ENCODE measurements at regions of chr2 and their contacts with region 1.

Region 1: DNA sequence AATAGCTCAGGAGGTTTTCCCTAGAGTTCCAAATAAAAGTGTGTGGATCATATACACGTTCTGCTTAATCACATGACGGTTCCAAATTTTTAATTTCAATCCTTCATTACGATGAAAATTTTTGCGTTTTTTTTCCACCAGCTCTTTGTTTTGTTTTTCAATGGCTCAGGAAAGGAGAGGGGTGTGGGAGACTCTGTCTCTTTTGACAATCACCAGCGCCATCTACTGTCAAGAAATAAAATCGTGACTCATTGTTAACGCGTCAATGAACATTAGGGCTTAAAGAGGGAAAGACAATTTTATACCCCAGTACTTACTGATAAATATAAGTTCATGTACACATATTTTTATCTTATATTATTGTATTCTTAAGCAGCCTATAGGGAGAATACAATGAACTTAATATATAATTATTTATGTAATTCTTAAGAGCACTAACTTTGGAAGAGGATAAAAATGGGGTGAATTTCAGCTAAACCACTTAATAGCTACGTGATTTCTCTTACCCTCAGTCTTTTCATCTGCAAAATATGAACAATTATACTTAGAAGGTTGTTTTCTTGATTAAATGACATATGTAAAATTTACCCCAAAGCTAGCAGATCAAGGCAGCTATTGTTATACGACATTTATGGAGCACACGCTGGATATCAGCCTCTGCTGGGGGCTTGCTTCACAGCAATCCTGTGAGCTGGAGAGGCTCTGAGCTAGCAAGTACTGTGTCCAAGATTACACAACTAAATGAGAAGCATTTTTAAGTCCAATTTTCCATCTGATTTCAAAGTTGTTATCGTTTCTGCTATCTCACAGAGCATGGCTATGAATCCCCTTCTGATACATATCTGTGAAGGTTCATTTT is 47.4 kb upstream of the RMDN2 start:
- DNase-seq: peak in 4 of 5 donors; percentile 45 to 57 (median 52)
- H3K4me3 ChIP-seq: no peak overlapping the region
- H3K4me3 Mint-ChIP-seq: no peak overlapping the region
- H3K27ac ChIP-seq: no peak overlapping the region
- H3K27ac Mint-ChIP-seq: no peak overlapping the region
- H3K4me1 ChIP-seq: no peaks in the 10 kb centered on the region
- H3K4me1 Mint-ChIP-seq: no peaks in the 10 kb centered on the region
- H3K27me3 ChIP-seq: no peaks in the 10 kb centered on the region
- H3K27me3 Mint-ChIP-seq: peaks cover 2 to 7% of the 10 kb centered on the region in 2 donors

Region 2: DNA sequence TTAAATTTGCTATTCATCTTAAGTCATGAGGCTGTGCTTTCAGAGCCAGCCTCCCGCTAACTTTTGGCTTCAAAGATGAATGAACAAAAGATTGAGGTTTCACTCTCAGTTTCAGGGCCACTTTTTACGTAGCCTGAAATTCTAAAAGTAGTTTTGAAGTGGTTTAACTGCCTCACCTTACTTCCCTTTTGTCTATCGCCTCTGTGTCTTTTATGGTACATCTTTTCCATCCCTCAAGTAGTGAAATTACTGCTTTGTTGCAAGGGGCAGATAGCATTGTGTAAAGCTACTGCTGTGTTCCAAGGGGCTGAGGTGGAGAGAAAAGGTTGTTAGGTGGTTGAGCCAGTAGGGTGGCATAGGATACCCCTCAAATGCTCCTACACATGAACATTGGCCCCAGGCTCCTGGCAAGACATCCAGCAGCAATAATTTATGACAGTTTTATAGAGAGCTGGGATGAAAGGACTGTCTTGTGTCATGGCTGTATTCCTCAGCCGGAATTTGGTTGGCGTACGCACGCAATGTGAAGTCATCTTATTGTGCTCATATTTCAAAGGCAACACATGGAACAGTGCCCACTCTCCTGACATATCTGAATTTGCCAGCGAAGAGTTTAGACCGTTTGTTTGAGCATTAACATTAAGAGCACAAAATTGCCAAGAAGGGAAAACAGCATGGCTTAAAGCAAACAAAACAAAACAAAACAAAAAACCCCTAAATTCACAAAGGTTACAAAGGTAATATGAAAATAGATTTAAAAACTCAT is 501.1 kb before region 1 on chr2:
- CTCF ChIA-PET with region 1: interaction called, 15 read pairs
- POLR2A ChIA-PET with region 1: no interaction called
- intact Hi-C with region 1: no loop called
- DNase-seq: peak in 4 of 5 donors; percentile 58 to 63 (median 59)
- H3K4me3 ChIP-seq: no peak overlapping the region
- H3K4me3 Mint-ChIP-seq: peak overlapping the region; percentile 3 to 85 (median 72)
- H3K27ac ChIP-seq: no peak overlapping the region
- H3K27ac Mint-ChIP-seq: peak overlapping the region in 3 of 7 donors; percentile 49 to 82 (median 53)
- H3K4me1 ChIP-seq: peaks cover 20% of the 10 kb centered on the region
- H3K4me1 Mint-ChIP-seq: peaks cover 10 to 17% (median 14%) of the 10 kb centered on the region in 4 donors
- H3K27me3 ChIP-seq: peaks cover 28% of the 10 kb centered on the region
- H3K27me3 Mint-ChIP-seq: peaks cover 28 to 35% of the 10 kb centered on the region in 2 donors

Region 3: DNA sequence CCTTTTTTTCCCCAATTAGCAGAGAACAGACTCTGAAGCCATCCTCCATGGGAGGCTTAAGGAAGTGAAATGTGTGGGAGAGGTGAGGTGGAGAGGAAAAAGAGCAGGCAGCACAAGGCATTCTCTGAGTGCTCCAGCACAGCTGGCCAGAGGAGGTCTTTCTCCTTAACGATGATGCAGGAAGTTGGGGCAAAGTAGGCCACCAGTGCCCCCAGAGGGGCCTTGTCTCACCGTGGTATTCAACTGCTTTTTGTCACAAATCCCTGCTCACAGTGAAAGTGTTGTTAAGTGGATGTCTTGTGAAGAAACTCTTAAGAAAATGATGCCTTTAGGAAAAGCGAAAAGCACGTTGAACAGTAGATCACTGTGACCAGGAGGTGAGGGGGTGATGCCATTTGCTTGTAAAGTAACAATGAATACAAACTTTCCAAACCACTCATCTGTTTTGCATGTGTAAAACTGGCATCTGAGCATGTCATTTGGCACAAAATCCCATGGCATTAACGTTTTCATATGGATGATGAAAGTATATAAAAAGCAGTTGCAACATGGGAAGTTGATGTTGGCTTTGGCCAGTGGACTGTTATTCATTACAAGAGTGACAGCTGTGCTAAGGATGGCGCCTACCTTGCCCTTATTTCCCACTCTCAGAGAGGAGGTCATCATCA is 157.0 kb before region 1 on chr2:
- CTCF ChIA-PET with region 1: no interaction called
- POLR2A ChIA-PET with region 1: no interaction called
- intact Hi-C with region 1: no loop called
- DNase-seq: no peak
- H3K4me3 ChIP-seq: no peak overlapping the region
- H3K4me3 Mint-ChIP-seq: no peak overlapping the region
- H3K27ac ChIP-seq: no peak overlapping the region
- H3K27ac Mint-ChIP-seq: no peak overlapping the region
- H3K4me1 ChIP-seq: no peaks in the 10 kb centered on the region
- H3K4me1 Mint-ChIP-seq: peaks cover 0 to 4% (median under 1%) of the 10 kb centered on the region in 4 donors
- H3K27me3 ChIP-seq: no peaks in the 10 kb centered on the region
- H3K27me3 Mint-ChIP-seq: peaks cover 0 to 2% of the 10 kb centered on the region in 2 donors

Region 4: GRCh38 chr2:37832590-37833197 is 45.0 kb before region 1 on chr2:
- CTCF ChIA-PET with region 1: interaction called, 72 read pairs
- POLR2A ChIA-PET with region 1: interaction called, 5 read pairs
- intact Hi-C with region 1: loop called (anchors 1 kb)
- DNase-seq: peak; percentile 69 to 75 (median 74)
- H3K4me3 ChIP-seq: no peak overlapping the region
- H3K4me3 Mint-ChIP-seq: no peak overlapping the region
- H3K27ac ChIP-seq: no peak overlapping the region
- H3K27ac Mint-ChIP-seq: peak overlapping the region in 2 of 7 donors; percentile 16 to 48
- H3K4me1 ChIP-seq: peaks cover 16% of the 10 kb centered on the region
- H3K4me1 Mint-ChIP-seq: peaks cover 5 to 26% (median 11%) of the 10 kb centered on the region in 4 donors
- H3K27me3 ChIP-seq: no peaks in the 10 kb centered on the region
- H3K27me3 Mint-ChIP-seq: no peaks in the 10 kb centered on the region

Region 5: GRCh38 chr2:37851828-37852584 is 25.7 kb before region 1 on chr2:
- CTCF ChIA-PET with region 1: interaction called, 15 read pairs
- POLR2A ChIA-PET with region 1: no interaction called
- intact Hi-C with region 1: loop called (anchors 2 kb)
- DNase-seq: peak in 2 of 5 donors; percentile 54 to 56
- H3K4me3 ChIP-seq: no peak overlapping the region
- H3K4me3 Mint-ChIP-seq: peak overlapping the region in 5 of 8 donors; percentile 34 to 70 (median 63)
- H3K27ac ChIP-seq: peak overlapping the region; percentile 16
- H3K27ac Mint-ChIP-seq: peak overlapping the region in 4 of 7 donors; percentile 83 to 91 (median 88)
- H3K4me1 ChIP-seq: peaks cover 19% of the 10 kb centered on the region
- H3K4me1 Mint-ChIP-seq: peaks cover 5 to 22% (median 12%) of the 10 kb centered on the region in 4 donors
- H3K27me3 ChIP-seq: no peaks in the 10 kb centered on the region
- H3K27me3 Mint-ChIP-seq: no peaks in the 10 kb centered on the region

Region 6: GRCh38 chr2:37890893-37891495 is 13.3 kb after region 1 on chr2:
- CTCF ChIA-PET with region 1: interaction called, 32 read pairs
- POLR2A ChIA-PET with region 1: no interaction called
- intact Hi-C with region 1: no loop called
- DNase-seq: peak; percentile 40 to 51 (median 47)
- H3K4me3 ChIP-seq: no peak overlapping the region
- H3K4me3 Mint-ChIP-seq: peak overlapping the region in 3 of 8 donors; percentile 22 to 79 (median 51)
- H3K27ac ChIP-seq: no peak overlapping the region
- H3K27ac Mint-ChIP-seq: peak overlapping the region in 1 of 7 donors; percentile 25
- H3K4me1 ChIP-seq: peaks cover 34% of the 10 kb centered on the region
- H3K4me1 Mint-ChIP-seq: peaks cover 35 to 45% (median 37%) of the 10 kb centered on the region in 4 donors
- H3K27me3 ChIP-seq: no peaks in the 10 kb centered on the region
- H3K27me3 Mint-ChIP-seq: peaks cover 3 to 5% of the 10 kb centered on the region in 2 donors